Adrenal gland (tissue), 19 donors: ENCODE measurements at regions of chr22 and their contacts with region 1.

Region 1: GRCh38 chr22:38777087-38777671 is 16.8 kb downstream of the DNAL4 start:
- DNase-seq: no peak
- H3K4me3 ChIP-seq: no peak overlapping the region
- H3K27ac ChIP-seq: no peak overlapping the region
- H3K4me1 ChIP-seq: no peaks in the 10 kb centered on the region
- H3K27me3 ChIP-seq: no peaks in the 10 kb centered on the region
- CTCF ChIP-seq: no peak
- POLR2A ChIP-seq: no peak

Region 2: GRCh38 chr22:38452373-38453065 is 324.7 kb before region 1 on chr22:
- intact Hi-C with region 1: no loop called
- DNase-seq: peak in 2 of 7 donors; percentile 40 to 44
- H3K4me3 ChIP-seq: no peak overlapping the region
- H3K27ac ChIP-seq: no peak overlapping the region
- H3K4me1 ChIP-seq: peaks cover 0 to 8% of the 10 kb centered on the region in 2 donors
- H3K27me3 ChIP-seq: peaks cover 20% of the 10 kb centered on the region
- CTCF ChIP-seq: no peak
- POLR2A ChIP-seq: no peak

Region 3: DNA sequence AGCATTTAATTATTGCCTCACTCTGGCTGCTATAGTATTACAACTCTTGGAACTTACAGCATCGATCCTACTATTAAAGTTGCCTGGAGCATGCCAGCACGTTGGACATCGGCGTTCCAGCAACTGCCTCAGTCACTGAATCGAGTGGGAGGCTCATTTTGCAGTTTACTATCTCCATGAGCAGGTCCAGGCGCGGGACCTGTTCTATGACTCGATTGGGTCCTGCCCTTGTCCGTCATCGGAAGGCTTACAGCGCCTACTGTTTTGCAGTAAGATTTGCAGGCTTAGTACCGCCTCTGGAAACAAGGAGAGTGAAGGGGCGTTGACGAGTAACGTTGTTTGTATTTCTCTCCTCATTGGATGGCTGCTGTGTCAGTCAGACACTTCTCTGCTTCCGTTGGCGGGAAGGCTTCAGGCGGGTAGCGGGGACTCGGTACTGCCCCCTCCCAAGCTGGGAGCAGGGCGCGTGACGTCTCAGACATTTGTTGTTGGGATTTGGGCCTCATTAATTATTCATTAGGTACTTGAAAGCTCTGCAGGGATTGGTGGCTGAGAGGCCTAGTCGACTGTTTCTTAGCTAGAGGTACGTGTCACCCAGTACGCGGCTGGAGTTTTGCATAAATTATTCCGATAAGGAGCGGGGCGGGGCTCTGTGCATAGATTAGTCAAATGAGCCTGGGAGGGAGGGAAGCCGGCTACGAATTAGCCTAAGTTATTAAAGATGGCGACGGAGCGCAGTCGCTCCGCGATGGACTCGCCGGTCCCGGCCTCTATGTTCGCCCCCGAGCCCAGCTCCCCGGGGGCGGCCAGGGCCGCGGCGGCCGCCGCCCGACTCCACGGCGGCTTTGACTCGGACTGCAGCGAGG is 71.7 kb before region 1 on chr22 and contains the start of gene GTPBP1:
- intact Hi-C with region 1: no loop called
- DNase-seq: peak; percentile 99 to 100 (median 99)
- H3K4me3 ChIP-seq: peak within 1 kb of the TSS; percentile 44 to 92 (median 88)
- H3K27ac ChIP-seq: peak within 1 kb of the TSS; percentile 85 to 96 (median 91)
- H3K4me1 ChIP-seq: peaks cover 15 to 30% of the 10 kb centered on the region in 2 donors
- H3K27me3 ChIP-seq: no peaks in the 10 kb centered on the region
- CTCF ChIP-seq: no peak
- POLR2A ChIP-seq: peak; percentile 79 to 95
- total RNA-seq, gene GTPBP1: 21.0 to 56.9 (median 42.3) TPM

Region 4: DNA sequence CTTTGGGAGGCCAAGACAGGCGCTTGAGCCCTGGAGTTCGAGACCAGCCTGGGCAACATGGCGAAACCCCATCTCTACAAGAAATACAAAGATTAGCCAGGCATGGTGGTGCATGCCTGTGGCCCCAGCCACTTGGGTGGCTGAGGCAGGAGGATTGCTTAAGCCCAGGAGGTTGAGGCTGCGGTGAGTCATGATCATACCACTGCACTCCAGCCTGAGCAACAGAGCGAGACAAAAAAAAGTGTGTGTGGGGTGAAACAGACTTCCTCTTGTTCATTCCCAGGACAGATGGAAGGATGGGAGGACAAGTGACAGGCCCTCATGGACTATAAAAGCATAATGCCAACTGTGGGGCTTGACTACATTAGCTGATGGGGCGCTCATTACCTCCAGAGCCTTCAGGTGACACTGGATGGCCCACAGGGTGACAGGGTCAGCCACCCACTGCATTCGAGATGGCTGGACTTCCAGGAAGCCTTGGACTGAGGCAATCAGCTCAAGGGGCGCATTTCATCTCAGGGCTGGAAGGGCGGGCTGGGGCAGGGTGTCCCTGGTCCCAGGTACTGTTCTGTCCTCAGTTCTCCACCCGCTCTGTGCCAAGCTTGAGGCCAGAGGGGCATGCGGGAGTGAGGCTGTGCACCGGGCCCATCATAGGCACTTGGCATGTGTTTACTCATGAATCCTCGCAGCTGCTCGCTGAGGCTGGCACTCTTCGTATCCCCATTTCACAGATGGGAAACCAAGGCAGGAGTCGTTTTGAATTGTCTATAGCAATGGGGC is 54.2 kb after region 1 on chr22:
- intact Hi-C with region 1: no loop called
- DNase-seq: peak in 1 of 7 donors; percentile 1
- H3K4me3 ChIP-seq: no peak overlapping the region
- H3K27ac ChIP-seq: no peak overlapping the region
- H3K4me1 ChIP-seq: no peaks in the 10 kb centered on the region
- H3K27me3 ChIP-seq: no peaks in the 10 kb centered on the region
- CTCF ChIP-seq: no peak
- POLR2A ChIP-seq: no peak

Region 5: GRCh38 chr22:38843201-38843715 is 66.1 kb after region 1 on chr22:
- intact Hi-C with region 1: loop called in 1 of 2 experiments (anchors 10 kb)
- DNase-seq: peak; percentile 33 to 61 (median 56)
- H3K4me3 ChIP-seq: peak overlapping the region in 1 of 4 donors; percentile 62
- H3K27ac ChIP-seq: peak overlapping the region in 2 of 5 donors; percentile 52 to 88
- H3K4me1 ChIP-seq: peaks cover 3 to 11% of the 10 kb centered on the region in 2 donors
- H3K27me3 ChIP-seq: no peaks in the 10 kb centered on the region
- CTCF ChIP-seq: peak in 3 of 6 experiments; percentile 30 to 59 (median 44)
- POLR2A ChIP-seq: peak; percentile 1 to 29

Region 6: DNA sequence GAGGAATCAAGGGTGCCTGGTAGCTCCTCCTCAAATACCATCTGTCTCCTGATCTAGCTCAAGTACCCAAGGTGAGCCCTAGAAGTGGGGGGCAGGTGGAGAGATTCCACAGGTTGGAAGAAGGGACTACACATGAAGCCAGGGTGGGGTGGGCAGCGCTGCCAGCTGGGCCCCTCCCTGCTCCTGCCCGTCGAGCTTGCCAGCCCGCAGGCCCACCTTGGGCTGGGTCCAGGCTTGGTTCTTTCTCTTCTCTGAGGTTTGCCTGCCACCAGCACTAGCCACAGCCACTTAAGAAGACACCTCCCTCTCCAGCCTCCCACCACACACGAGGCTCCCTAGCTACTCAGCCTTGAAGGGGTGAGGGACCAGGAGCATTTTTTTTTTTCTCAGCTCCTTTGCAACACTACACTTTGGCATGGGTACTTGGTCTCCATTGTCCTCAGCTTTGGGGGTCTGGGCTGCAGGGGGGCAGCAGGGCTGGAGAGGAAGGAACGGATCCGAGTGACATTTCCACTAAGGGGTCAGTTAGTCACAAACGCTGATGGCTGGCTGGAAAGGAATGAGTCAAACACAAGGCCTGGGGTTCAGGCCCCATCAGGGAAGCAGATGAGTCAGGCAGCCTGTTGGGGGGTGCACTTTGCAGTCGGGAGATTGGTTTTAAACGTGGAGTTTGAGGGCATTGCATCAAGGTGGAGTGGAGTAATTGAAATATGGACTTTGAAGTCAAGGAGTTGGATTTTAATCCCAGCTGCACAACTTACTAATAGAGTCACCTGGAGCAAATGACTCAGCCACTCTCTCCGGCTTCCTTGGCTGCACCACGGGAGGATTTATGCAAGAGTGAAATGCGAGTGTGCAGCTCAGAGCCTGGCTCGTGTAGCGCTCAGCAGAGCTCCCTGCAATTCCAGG is 74.0 kb after region 1 on chr22:
- intact Hi-C with region 1: loop called (anchors 5 to 10 kb)
- DNase-seq: peak in 3 of 7 donors; percentile 48 to 54 (median 51)
- H3K4me3 ChIP-seq: no peak overlapping the region
- H3K27ac ChIP-seq: no peak overlapping the region
- H3K4me1 ChIP-seq: no peaks in the 10 kb centered on the region
- H3K27me3 ChIP-seq: no peaks in the 10 kb centered on the region
- CTCF ChIP-seq: no peak
- POLR2A ChIP-seq: no peak

Region 7: GRCh38 chr22:38927033-38927781 is 150.0 kb after region 1 on chr22:
- intact Hi-C with region 1: loop called in 1 of 2 experiments (anchors 10 kb)
- DNase-seq: peak; percentile 69 to 90 (median 81)
- H3K4me3 ChIP-seq: peak overlapping the region in 1 of 4 donors; percentile 53
- H3K27ac ChIP-seq: peak overlapping the region in 2 of 5 donors; percentile 53 to 58
- H3K4me1 ChIP-seq: peaks cover 15 to 36% of the 10 kb centered on the region in 2 donors
- H3K27me3 ChIP-seq: no peaks in the 10 kb centered on the region
- CTCF ChIP-seq: peak; percentile 53 to 77 (median 62)
- POLR2A ChIP-seq: peak in 1 of 2 donors; percentile 16